WTC11 (cell line): ENCODE measurements at regions of chr20 and their contacts with region 1.

Region 1: GRCh38 chr20:1776681-1777475 is 118.3 kb upstream of the SIRPA start:
- DNase-seq: peak; percentile 93
- ATAC-seq: peak; percentile 88
- H3K4me3 Mint-ChIP-seq: peak overlapping the region; percentile 88
- H3K27ac Mint-ChIP-seq: no peak overlapping the region
- H3K4me1 Mint-ChIP-seq: peaks cover 14% of the 10 kb centered on the region
- H3K27me3 Mint-ChIP-seq: peaks cover 3% of the 10 kb centered on the region
- CTCF ChIP-seq: peak; percentile 76; the same call in 1 of the 2 replicates

Region 2: DNA sequence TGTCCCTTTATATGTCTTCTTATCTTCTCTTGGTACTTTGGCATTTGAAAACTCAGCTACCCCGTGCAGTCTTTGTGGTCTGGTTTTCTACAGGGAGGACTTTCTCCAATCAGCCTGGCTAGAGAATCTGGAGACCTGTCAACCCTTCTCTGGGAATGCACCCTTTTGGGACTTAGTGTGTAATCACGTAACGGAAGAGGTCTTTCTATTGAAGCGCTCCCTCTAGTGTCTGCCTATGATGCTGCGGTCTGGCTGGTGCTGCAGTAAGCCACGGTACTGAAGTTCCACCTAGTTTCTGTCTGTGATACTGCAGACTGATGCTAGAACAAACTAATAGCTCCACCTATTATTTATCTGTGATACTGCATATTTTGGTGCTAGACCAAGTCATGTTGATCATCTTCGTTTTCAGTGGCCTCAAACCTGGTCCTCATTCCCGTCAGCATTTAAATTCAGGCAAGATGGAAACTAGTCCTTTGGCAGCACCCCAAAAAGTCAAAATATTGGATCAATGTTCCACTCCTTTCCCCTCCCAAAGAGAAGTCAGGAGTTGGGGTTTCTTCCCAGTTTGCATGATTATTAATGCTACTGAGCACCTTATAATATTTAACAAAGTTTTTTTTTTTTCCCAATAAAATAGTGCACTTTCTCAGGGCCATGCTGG is 273.2 kb before region 1 on chr20:
- CTCF ChIA-PET with region 1: interaction called, 33 read pairs
- POLR2A ChIA-PET with region 1: no interaction called
- DNase-seq: peak; percentile 81
- ATAC-seq: peak; percentile 92
- H3K4me3 Mint-ChIP-seq: no peak overlapping the region
- H3K27ac Mint-ChIP-seq: no peak overlapping the region
- H3K4me1 Mint-ChIP-seq: peaks cover 18% of the 10 kb centered on the region
- H3K27me3 Mint-ChIP-seq: peaks cover 33% of the 10 kb centered on the region
- CTCF ChIP-seq: peak; percentile 53

Region 3: DNA sequence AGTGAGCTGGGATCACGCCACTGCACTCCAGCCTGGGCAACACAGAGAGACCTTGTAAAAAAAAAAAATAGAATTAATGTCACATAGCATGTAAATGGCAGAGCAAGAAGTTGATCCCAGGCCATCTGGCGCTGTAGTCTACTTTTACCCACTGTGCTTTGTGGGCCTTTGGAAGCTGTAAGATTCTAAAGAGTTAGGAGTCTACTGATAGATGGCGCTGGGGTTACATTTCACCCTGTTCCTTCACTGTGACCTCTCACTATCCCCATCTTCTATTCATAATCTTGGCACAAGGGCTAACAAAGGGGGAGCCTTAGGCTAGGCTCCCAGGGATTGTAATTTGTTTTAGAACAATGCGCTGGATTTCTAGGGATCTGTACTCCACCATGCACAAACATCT is 243.8 kb before region 1 on chr20:
- CTCF ChIA-PET with region 1: interaction called, 40 read pairs
- POLR2A ChIA-PET with region 1: no interaction called
- DNase-seq: no peak
- ATAC-seq: peak; percentile 95
- H3K4me3 Mint-ChIP-seq: no peak overlapping the region
- H3K27ac Mint-ChIP-seq: no peak overlapping the region
- H3K4me1 Mint-ChIP-seq: no peaks in the 10 kb centered on the region; the same call in 1 of the 2 replicates
- H3K27me3 Mint-ChIP-seq: no peaks in the 10 kb centered on the region
- CTCF ChIP-seq: no peak

Region 4: DNA sequence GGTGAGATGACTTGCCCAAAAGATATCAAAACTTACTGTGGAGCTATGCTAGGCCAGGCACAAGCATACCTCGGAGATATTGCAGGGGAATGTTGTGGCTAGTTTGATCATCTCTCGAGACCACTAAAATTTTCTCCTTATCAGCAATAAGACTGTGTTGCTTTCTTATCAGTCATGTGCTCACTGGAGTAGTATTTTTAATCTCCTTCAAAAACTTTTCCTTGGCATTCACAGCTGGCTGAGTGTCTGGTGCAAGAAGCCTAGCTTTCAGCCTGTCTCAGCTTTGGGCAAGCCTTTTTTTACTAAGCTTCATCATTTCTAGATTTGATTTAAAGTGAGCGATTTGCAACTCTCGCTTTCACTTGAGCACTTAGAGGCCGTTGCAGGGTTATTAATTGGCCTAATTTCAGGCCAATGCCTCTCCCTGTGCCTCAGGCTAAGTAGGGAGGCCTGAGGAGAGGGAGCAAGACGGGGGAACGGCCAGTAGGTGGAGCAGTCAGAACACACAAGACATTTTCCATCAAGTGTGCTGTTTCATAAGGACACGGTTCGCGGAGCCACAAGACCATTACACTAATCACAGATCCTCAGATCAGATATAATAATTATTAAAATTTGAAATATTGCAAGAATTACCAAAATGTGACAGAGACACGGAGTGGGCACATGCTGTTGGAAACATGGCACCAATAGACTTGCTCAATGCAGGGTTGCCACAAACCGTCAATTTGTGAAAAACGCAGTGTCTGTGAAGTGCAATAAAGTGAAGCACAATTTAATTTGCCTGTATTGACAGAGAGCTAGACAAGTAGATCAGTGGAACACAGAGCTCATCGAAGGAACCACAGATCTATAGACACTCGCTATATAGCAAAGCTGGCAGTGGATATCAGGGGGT is 12.5 kb before region 1 on chr20:
- CTCF ChIA-PET with region 1: interaction called, 45 read pairs
- POLR2A ChIA-PET with region 1: no interaction called
- DNase-seq: peak; percentile 81
- ATAC-seq: peak; percentile 92
- H3K4me3 Mint-ChIP-seq: no peak overlapping the region
- H3K27ac Mint-ChIP-seq: no peak overlapping the region
- H3K4me1 Mint-ChIP-seq: no peaks in the 10 kb centered on the region; the same call in 1 of the 2 replicates
- H3K27me3 Mint-ChIP-seq: peaks cover 10% of the 10 kb centered on the region
- CTCF ChIP-seq: peak; percentile 40; the same call in 1 of the 2 replicates

Region 5: DNA sequence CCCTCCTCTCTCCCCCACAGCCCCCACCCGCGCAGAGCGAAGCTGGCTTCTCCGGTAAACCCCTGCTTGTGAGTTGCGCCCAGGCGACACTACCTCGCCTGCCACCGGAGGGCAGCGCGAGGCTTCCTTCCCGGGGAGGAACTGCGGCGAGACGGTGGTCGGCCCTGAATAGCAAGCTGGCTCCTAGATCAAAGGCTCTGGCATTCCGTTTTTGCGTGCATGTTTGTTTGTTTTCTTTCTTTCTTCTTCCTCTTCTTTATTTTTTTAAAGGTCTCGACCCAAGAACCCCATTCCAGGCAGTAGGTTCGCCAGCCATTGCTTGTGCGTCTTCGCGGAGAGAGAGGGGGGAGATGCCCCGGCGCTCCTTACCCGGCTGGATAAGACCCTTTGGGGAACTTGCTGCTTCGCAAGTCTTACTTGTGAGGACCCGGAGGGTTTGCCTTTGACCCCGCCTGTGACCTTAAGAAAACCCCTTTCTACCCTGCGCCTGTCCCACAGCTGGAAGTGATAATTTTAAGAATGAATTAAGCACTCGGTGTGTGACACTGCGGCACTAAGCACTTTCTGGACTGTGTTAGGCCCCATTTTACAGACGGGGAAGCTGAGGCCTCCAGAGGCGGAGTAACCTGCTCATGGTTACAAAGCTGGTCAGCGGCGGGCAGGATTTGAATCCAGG is 25.6 kb after region 1 on chr20:
- CTCF ChIA-PET with region 1: interaction called, 36 read pairs
- POLR2A ChIA-PET with region 1: no interaction called
- DNase-seq: peak; percentile 79
- ATAC-seq: peak; percentile 73
- H3K4me3 Mint-ChIP-seq: peak overlapping the region; percentile 84
- H3K27ac Mint-ChIP-seq: no peak overlapping the region; the same call in 1 of the 2 replicates
- H3K4me1 Mint-ChIP-seq: peaks cover 41% of the 10 kb centered on the region
- H3K27me3 Mint-ChIP-seq: peaks cover 29% of the 10 kb centered on the region
- CTCF ChIP-seq: no peak

Region 6: GRCh38 chr20:1946762-1947534 is 170.1 kb after region 1 on chr20:
- CTCF ChIA-PET with region 1: interaction called, 11 read pairs
- POLR2A ChIA-PET with region 1: interaction called, 3 read pairs
- DNase-seq: peak; percentile 90
- ATAC-seq: peak; percentile 81
- H3K4me3 Mint-ChIP-seq: peak overlapping the region; percentile 72
- H3K27ac Mint-ChIP-seq: peak overlapping the region; percentile 75
- H3K4me1 Mint-ChIP-seq: peaks cover 64% of the 10 kb centered on the region
- H3K27me3 Mint-ChIP-seq: peaks cover 42% of the 10 kb centered on the region
- CTCF ChIP-seq: no peak